Activated T-helper 2 cell treated with anti-CD3 and anti-CD28 coated beads, Interferon-gamma antibody, Interleukin-2, Interleukin-4, amounts not matched to agents 10 μg/mL and 5 μg/mL and 100 μg/mL, durations not matched to agents 14 hours and 24 hours and 36 hours (primary cell): ENCODE measurements at regions of chr6 and their contacts with region 1.

Region 1: GRCh38 chr6:127516666-127517273 is 2.4 kb downstream of the MTCL3 start:
- DNase-seq: peak; percentile 50
- H3K4me3 Mint-ChIP-seq: peak overlapping the region; percentile 90
- H3K27ac Mint-ChIP-seq: peak overlapping the region; percentile 73
- H3K4me1 Mint-ChIP-seq: peaks cover 48% of the 10 kb centered on the region
- H3K27me3 Mint-ChIP-seq: peaks cover 11% of the 10 kb centered on the region

Region 2: DNA sequence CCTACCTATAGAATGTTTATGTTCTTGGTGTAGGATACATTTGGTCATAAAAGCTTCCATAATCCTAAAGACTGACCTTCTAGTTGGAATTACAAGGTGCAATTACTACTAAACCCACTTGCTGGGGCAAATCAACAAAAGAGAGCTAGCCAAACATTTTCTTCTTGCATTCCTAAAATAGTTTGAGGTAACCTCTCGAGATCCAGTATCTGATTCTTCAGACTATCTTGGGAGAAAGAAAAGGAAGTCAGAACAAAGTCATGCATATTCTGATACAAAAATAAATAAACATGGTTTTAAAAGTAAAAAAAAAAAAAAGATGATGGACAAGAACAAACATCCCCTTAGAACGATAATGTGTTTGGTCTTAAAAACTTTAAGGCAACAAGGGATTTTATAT is 692.5 kb before region 1 on chr6:
- intact Hi-C with region 1: no loop called
- DNase-seq: no peak
- H3K4me3 Mint-ChIP-seq: no peak overlapping the region
- H3K27ac Mint-ChIP-seq: no peak overlapping the region
- H3K4me1 Mint-ChIP-seq: no peaks in the 10 kb centered on the region
- H3K27me3 Mint-ChIP-seq: no peaks in the 10 kb centered on the region

Region 3: GRCh38 chr6:127302728-127303660 is 213.8 kb before region 1 on chr6:
- intact Hi-C with region 1: loop called (anchors 5 kb)
- DNase-seq: peak; percentile 16
- H3K4me3 Mint-ChIP-seq: no peak overlapping the region
- H3K27ac Mint-ChIP-seq: no peak overlapping the region
- H3K4me1 Mint-ChIP-seq: peaks cover 23% of the 10 kb centered on the region
- H3K27me3 Mint-ChIP-seq: no peaks in the 10 kb centered on the region

Region 4: DNA sequence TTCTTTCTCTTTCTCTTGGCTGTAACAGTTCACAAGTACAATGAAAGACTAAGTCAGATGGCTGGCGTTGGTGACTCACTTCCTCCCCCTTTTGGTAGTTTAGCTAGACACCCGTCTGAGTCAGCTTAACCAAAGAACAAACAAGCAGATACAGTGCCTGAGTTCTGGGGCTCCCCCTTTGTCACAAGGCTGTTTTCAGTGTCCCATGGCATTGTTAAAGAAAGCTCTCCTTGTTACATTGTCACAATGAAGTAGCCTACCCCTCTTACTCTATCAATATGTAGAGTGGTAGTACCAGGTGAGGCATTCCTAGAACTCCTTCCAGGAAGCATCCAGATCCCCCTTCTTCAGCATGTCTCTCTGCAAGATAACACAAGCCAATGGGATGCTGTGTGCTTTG is 96.2 kb before region 1 on chr6:
- intact Hi-C with region 1: loop called (anchors 1 kb)
- DNase-seq: peak; percentile 74
- H3K4me3 Mint-ChIP-seq: no peak overlapping the region
- H3K27ac Mint-ChIP-seq: peak overlapping the region; percentile 60
- H3K4me1 Mint-ChIP-seq: peaks cover 16% of the 10 kb centered on the region
- H3K27me3 Mint-ChIP-seq: no peaks in the 10 kb centered on the region

Region 5: GRCh38 chr6:127484212-127484858 is 32.4 kb before region 1 on chr6:
- intact Hi-C with region 1: loop called (anchors 1 kb)
- DNase-seq: no peak
- H3K4me3 Mint-ChIP-seq: peak overlapping the region; percentile 66
- H3K27ac Mint-ChIP-seq: peak overlapping the region; percentile 65
- H3K4me1 Mint-ChIP-seq: peaks cover 42% of the 10 kb centered on the region
- H3K27me3 Mint-ChIP-seq: no peaks in the 10 kb centered on the region

Region 6: DNA sequence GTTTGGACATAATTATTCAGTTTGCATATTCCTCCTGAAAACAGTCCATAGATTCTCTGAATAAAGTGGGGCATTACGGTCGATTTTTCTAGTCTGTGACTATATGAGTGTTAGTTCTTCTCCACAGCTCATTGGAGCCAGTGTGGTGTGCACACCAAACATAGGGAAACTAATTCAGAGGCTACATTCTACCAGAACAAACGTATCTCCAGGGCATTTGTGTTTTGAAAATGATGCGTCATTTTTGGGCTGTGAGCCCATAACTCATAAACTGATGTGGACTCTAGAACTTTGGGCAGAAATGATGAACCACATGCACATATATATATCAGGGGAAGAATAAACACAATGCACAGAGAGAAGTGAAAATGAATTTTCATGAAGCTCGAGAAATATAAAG is 102.0 kb after region 1 on chr6:
- intact Hi-C with region 1: no loop called
- DNase-seq: no peak
- H3K4me3 Mint-ChIP-seq: no peak overlapping the region
- H3K27ac Mint-ChIP-seq: no peak overlapping the region
- H3K4me1 Mint-ChIP-seq: no peaks in the 10 kb centered on the region
- H3K27me3 Mint-ChIP-seq: peaks cover 2% of the 10 kb centered on the region

Region 7: DNA sequence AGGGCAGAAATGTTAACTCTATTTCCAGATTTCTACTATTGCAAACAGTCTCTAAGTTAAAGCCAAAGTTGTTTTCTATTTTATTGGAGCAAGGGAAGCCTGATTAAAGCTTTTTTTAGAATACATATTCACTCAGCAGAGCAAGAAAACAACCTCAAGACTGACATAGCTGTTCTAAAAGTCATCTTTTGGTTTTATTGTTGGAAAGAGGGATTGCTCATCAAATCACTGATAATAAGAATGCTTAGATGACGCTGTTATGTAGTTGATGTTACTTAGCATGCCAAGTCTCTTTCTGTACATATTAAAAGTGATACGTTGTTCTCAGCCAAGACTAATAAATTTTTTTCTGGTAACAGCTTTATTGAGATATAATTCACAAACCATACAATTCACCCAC is 1193.5 kb after region 1 on chr6:
- intact Hi-C with region 1: no loop called
- DNase-seq: no peak
- H3K4me3 Mint-ChIP-seq: no peak overlapping the region
- H3K27ac Mint-ChIP-seq: no peak overlapping the region
- H3K4me1 Mint-ChIP-seq: no peaks in the 10 kb centered on the region
- H3K27me3 Mint-ChIP-seq: no peaks in the 10 kb centered on the region